ENCODE measurements at regions of chr9 and their contacts with region 1.

Region 1: DNA sequence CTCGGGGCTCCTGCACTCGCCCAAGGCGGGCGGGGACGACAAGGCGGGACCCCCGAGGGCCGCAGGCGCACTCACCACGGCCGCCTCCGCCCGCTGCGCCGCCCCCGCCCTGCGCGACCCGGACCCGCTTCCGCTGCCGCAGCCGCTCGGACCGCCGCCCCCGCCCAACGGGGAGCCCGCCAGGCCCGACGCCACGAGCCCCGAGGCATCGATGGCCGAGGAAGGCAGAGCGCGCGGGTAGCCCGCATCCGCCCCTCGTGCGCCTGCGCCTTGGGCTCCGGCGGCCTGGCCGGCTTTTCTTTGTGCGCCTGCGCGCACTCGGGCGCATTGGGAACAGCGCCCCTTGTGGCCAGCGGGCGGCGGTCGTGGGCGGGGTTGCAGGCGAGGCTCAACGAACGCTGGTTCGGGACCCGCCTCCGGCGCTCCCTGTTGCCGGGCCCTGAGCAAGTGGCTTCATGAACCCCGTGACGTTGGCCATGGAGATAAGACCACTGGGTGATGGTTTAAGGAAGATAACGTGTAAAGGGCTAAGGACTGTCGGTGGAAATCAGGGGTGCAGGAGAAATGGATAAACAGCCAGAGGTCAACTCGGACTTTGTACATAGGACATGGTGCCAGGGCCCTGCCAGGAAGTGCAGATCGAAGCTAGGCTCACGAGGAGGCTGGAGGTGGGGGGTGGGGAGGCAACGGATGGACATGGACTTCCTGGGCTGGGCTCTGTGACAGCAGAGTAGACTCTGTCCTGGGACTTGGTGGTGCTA is at the starts of genes C8G and FBXW5:
- DNase-seq: peak; percentile 96 to 99 (median 98)
- ATAC-seq: peak; percentile 64 to 75
- H3K4me3 ChIP-seq: peak within 1 kb of the TSS; percentile 75
- H3K27ac ChIP-seq: peak within 1 kb of the TSS; percentile 93
- H3K4me1 ChIP-seq: no peaks in the 10 kb centered on the region
- H3K27me3 ChIP-seq: no peaks in the 10 kb centered on the region
- total RNA-seq, gene C8G: 1.0 to 1.8 (median 1.4) TPM
- total RNA-seq, gene FBXW5: 108 to 139 (median 120) TPM

Region 2: DNA sequence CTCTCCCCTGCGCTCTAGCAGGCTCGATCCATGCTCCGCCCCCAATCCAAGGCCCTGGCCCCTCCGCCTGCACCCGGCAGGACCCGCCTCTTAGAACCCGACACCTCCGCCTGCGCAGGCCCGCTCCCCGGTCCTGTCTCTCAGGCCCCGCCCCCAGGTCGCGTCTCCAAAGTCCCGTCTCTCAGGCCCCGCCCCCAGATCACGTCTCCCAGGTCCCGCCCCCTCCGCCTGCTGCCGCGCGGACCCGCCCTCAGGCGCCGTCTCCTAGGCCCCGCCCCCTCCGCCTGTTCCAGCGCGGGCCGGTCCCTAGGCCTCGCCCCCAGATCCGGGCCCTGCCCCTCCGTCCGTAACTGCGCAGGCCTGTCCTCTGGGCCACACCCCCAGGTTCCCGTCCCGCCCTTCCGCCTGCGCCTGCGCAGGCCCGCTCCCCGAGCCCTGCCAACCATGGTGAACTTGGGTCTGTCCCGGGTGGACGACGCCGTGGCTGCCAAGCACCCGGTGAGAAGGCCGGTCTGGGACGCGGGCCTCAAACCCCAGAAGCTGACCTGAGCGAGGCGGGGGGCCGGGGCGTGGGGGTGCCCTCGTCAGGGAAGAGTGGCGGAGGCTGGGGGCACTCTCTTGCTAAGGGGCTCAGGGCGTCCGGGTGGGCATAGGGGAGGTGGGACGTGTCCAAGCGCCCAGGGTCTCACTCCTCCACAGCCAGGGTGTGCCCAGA is 153.6 kb before region 1 on chr9 and contains the start of gene TMEM141:
- intact Hi-C with region 1: loop called in 2 of 4 experiments (anchors 5 to 10 kb)
- DNase-seq: peak; percentile 100
- ATAC-seq: peak; percentile 96 to 97
- H3K4me3 ChIP-seq: peak within 1 kb of the TSS; percentile 55
- H3K27ac ChIP-seq: peak within 1 kb of the TSS; percentile 85
- H3K4me1 ChIP-seq: peaks cover 3% of the 10 kb centered on the region
- H3K27me3 ChIP-seq: no peaks in the 10 kb centered on the region
- total RNA-seq, gene TMEM141: 73.6 to 115 (median 100) TPM

Region 3: DNA sequence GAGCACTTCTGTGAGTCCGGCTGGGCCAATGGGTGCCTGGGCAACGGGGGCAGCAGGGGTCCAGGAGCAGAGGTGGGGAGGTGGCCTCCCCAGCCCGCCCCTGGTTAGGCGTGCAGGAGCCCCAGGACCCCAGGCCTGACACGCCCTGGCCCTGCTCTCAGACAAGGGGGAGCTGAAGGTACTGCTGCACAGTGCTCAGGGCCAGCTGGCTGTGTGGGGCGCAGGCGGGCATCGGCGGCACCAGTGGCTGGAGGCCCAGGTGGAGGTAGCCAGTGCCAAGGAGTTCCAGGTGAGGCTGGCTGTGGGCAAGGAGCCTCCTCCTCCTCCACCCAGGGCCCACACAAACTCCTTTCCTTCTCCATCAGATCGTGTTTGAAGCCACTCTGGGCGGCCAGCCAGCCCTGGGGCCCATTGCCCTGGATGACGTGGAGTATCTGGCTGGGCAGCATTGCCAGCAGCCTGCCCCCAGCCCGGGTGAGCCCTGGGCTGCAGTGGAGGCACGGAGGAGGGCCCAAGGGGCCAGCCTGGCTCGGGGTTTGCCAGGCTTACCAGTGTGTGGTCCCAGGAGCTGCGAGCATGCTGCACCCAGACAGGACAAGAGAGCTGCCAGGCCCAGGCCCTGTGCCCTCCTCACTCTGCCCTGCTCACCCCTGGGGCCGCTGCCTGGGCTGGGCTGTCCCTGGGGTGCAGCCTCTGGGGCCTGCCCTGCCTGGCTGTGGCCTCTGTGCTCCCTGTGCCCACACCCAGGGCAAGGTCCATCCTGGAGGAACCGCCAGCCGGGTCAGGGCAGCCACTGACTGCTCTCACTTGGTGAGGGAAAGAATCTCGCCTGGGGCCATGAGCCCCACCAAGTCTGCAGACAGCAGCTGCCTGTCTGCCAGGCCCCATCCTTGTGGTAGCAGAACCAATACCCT is 85.6 kb before region 1 on chr9:
- intact Hi-C with region 1: loop called in 1 of 4 experiments (anchors 10 kb)
- DNase-seq: peak; percentile 68 to 87 (median 84)
- ATAC-seq: peak; percentile 13 to 20
- H3K4me3 ChIP-seq: no peak overlapping the region
- H3K27ac ChIP-seq: no peak overlapping the region
- H3K4me1 ChIP-seq: no peaks in the 10 kb centered on the region
- H3K27me3 ChIP-seq: no peaks in the 10 kb centered on the region

Region 4: DNA sequence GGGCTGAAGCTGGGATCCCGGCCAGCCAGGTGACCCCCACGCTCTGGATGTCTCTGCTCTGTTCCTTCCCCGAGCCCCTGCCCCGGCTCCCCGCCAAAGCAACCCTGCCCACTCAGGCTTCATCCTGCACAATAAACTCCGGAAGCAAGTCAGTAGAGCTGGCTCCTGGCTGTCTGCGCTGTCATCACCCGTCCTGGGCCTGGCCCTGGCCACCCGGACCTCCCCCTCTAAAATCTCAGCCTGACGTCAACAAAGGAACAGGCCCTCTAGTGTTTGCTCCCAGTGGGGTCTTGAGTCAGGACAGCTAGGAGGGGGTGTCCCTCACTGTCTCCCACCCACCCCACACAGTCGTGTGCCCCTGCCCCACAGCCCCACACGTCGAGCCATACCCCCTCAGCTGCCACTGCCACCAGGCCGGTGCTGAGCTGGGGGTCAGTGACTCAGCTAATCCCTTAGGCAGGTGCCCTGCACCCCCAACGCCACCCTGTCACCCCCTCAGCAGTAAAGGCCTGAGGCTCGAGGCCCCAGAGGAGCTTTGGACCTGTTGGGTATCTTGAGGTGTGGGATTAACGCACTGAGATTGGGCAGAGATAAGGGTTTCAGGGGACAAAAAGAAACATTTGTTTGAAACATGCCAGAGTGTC is 37.0 kb after region 1 on chr9:
- intact Hi-C with region 1: loop called in 1 of 4 experiments (anchors 5 kb)
- DNase-seq: peak; percentile 76 to 88 (median 87)
- ATAC-seq: peak; percentile 12 to 44
- H3K4me3 ChIP-seq: no peak overlapping the region
- H3K27ac ChIP-seq: peak overlapping the region; percentile 81
- H3K4me1 ChIP-seq: no peaks in the 10 kb centered on the region
- H3K27me3 ChIP-seq: no peaks in the 10 kb centered on the region

Region 5: DNA sequence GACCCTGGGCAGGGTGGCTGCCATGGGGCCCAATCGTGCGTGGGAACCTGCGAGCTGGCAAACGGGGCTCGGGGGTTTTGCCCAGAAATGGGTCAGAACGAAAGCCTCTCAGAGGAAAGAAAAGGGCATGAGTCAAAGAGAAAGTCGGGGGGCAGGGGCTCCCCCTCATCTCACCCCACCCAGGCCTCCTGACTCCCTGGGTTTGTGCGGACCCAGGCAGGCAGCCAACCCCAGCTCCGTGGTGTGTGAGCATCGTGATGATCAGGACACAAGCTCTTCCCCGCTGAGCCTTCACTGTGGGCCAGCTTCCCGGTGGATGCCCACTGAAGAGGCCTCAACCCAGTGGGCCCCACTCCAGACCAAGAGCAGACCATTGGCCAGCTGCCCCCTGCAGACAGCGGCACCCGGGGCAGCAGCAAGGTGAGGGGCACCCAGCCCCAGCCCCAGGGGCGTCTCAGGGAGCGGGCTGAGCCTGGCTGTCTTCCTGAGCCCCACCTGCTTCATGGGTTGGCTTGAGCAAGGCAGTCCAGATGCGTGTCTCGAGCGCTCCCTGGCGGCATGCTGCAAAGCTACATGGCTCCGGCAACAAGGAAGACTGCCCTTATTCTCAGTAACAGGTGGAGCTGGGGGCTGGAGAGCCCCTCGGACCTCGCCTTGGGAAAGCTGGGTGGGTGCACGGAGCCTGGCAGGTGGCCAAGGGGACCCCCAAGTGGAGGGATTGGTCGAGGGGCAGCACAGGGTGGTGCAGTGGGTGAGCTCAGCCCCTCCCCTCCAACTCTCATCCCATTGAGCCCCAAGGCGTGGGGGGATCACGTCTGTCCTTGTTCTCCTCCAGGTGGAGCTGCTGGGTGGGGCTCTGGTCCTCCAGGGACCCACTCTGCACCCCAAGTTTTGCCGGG is 90.4 kb after region 1 on chr9:
- intact Hi-C with region 1: loop called in 2 of 4 experiments (anchors 5 to 10 kb)
- DNase-seq: peak; percentile 77 to 93 (median 90)
- ATAC-seq: peak; percentile 63 to 76
- H3K4me3 ChIP-seq: no peak overlapping the region
- H3K27ac ChIP-seq: no peak overlapping the region
- H3K4me1 ChIP-seq: no peaks in the 10 kb centered on the region
- H3K27me3 ChIP-seq: no peaks in the 10 kb centered on the region

Measured in right cardiac atrium (tissue), 5 donors.